Activated naive CD4-positive, alpha-beta T cell treated with anti-CD3 and anti-CD28 coated beads for 36 hours (primary cell): ENCODE measurements at regions of chr1 and their contacts with region 1.

Region 1: DNA sequence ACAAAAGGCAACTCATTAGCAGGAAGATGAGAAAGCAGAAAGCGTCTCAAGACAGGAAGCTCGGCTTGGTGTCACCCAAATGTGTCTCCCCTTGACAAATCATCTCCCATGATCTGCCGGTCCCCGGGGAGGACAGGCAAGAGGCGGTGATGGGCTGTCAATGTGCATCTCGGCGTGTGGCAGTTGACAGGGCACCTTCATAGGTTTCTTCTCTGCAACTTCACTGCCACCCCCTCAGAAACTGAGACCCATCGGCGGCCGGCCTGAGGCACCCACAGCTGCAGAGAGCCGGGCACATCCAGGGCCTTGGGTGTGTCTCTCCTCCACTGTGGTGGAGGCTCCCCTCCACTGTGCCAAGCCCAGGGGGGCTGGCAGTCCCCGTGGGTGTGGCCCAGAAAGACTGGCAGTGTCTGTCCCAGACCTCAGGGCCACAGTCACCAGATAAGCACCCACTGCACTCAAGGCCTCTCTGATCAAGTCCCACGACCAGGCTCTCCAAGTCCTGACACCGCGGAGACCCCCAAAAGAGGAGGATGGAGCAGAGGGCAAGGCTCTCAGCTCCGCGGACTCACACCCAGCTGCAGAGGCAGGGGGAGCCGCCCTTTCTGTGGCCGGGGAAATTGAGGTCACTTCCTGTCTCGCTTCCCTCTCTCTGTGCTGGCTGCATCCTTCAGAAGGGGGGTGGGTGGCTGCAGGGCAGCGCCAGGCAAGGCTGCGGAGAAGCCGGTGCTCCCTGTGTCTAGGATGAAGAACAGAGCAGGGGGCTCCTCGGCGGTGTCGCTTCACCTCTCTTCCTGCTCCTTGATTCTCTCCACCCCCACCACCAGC is 39.6 kb upstream of the LBR start:
- DNase-seq: peak; percentile 91
- H3K4me3 Mint-ChIP-seq: peak overlapping the region; percentile 90
- H3K27ac Mint-ChIP-seq: peak overlapping the region; percentile 99
- H3K4me1 Mint-ChIP-seq: peaks cover 17% of the 10 kb centered on the region
- H3K27me3 Mint-ChIP-seq: no peaks in the 10 kb centered on the region

Region 2: DNA sequence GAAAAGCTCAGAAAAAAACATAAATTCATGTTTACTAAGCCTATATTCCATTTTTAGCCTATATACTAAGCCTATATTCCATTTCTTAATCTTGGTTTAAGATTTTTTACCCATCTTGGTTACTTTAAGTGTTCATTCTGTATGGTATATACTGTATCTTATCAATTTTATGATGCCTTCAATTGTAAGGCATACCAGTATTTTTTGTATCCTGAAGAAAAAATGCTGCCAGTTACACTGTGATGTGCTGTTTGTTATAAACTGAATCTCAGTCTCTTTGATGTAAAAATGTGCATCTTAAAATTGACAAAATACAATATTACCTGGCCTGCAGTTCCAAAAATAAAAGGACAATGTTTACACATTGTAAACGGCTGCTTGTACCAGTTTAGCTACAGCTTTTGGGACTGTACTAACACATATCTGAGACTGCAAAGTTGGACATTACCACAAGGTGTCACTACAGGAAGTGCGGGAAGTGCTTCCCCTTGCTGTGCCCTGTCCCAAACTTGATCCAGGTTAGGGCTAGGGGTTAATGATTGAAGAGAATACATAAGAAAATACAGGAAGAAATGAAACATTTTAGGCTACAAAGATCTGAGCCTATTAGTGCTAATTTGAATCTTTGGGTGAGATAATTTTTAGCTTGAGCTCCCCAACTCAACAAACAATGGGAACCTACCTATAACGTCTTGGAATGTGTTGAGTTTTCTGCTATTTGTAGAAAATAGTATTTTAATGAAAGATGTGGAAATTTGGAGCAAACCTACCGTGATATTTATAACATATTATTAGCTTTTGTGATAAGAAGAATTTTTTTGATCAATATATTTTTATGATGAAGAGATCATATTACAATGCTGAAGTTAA is 148.5 kb before region 1 on chr1:
- CTCF ChIA-PET with region 1: no interaction called
- intact Hi-C with region 1: loop called (anchors 2 kb)
- DNase-seq: peak; percentile 55
- H3K4me3 Mint-ChIP-seq: no peak overlapping the region
- H3K27ac Mint-ChIP-seq: no peak overlapping the region
- H3K4me1 Mint-ChIP-seq: peaks cover 2% of the 10 kb centered on the region
- H3K27me3 Mint-ChIP-seq: no peaks in the 10 kb centered on the region

Region 3: GRCh38 chr1:225441314-225442122 is 25.9 kb before region 1 on chr1:
- CTCF ChIA-PET with region 1: interaction called, 7 read pairs
- intact Hi-C with region 1: loop called (anchors 1 kb)
- DNase-seq: no peak
- H3K4me3 Mint-ChIP-seq: peak overlapping the region; percentile 12
- H3K27ac Mint-ChIP-seq: peak overlapping the region; percentile 36
- H3K4me1 Mint-ChIP-seq: peaks cover 51% of the 10 kb centered on the region
- H3K27me3 Mint-ChIP-seq: no peaks in the 10 kb centered on the region

Region 4: DNA sequence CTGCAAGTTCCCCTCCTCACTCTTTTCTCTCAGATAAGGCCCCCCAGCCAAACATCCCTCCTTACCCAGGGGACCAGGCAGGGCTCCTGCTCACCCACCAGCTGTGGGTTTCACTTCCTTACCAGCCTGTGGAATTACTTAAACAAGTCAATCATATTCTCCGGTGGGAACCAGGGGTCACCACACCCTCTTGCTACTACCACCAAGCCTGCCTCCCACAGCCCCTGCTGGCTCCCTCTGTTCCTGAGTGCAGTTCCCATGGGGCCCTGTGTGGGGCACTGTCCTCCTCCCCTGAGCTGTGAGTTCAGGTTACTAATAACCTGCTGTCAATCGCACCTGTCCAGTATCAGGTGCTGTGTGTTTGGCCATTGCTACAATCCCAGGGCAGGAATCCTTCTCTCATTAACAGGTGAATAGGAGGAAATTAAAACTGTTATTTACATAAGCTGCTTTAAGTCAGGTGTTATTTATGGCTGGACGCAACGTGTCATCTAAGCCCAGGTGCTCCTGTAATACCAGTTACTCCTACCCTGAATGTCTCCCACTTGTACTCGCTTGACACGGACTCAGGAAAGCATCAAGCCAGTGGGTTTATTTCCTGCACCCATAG is 13.5 kb after region 1 on chr1:
- CTCF ChIA-PET with region 1: interaction called, 14 read pairs
- intact Hi-C with region 1: no loop called
- DNase-seq: peak; percentile 80
- H3K4me3 Mint-ChIP-seq: no peak overlapping the region
- H3K27ac Mint-ChIP-seq: no peak overlapping the region
- H3K4me1 Mint-ChIP-seq: peaks cover 22% of the 10 kb centered on the region
- H3K27me3 Mint-ChIP-seq: no peaks in the 10 kb centered on the region

Region 5: DNA sequence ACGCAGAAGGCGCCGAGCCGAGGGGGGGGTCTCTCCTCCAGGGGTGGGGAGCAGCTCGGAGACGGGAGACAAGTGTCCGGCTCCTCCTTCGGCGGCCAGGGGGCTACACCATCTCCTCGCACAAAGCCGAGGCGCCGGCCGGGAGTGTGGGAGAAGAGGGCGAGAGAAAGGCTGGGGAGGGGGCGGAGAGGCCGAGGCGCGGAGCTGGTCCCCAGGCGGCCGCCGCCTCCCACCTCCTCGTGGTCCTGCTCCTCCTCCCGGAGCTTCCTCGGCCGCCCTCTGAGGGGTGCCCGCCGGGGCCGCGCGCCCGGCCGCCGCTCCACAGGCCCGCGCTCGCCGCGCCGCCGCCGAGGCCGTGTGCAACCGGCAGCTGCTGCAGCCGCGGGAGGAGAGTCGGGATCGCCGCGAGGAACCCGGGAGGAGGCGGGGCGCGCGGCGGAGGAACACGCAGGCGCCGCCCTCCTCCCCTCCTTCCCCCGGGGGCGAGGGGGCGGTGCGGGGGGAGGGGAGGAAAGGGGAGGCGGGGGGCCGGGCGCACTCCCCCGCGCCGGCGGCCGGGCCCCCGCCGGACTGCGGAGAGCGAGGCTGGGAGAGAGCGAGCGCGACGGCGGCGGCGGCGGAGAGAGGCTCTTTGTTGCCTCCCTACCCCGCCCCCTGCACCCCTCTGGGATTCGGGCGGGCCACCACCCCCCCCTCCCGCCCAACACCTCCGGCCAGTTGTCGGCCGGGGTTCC is 185.5 kb after region 1 on chr1 and contains the start of gene ENAH:
- CTCF ChIA-PET with region 1: no interaction called
- intact Hi-C with region 1: no loop called
- DNase-seq: peak; percentile 52
- H3K4me3 Mint-ChIP-seq: peak within 1 kb of the TSS; percentile 85
- H3K27ac Mint-ChIP-seq: peak within 1 kb of the TSS; percentile 50
- H3K4me1 Mint-ChIP-seq: peaks cover 10% of the 10 kb centered on the region
- H3K27me3 Mint-ChIP-seq: peaks cover 24% of the 10 kb centered on the region
- total RNA-seq, gene ENAH: 0.91 to 2.0 TPM

Region 6: GRCh38 chr1:226186124-226187018 is 719.0 kb after region 1 on chr1 and contains the start of gene ACBD3:
- CTCF ChIA-PET with region 1: no interaction called
- intact Hi-C with region 1: loop called (anchors 1 kb)
- DNase-seq: peak; percentile 91
- H3K4me3 Mint-ChIP-seq: peak within 1 kb of the TSS; percentile 89
- H3K27ac Mint-ChIP-seq: peak within 1 kb of the TSS; percentile 87
- H3K4me1 Mint-ChIP-seq: peaks cover 34% of the 10 kb centered on the region
- H3K27me3 Mint-ChIP-seq: no peaks in the 10 kb centered on the region
- total RNA-seq, gene ACBD3: 15.0 to 15.7 TPM